HepG2 (cell line): ENCODE measurements at regions of chr20 and their contacts with region 1.

Region 1: GRCh38 chr20:9578594-9578993 is 64.2 kb downstream of the LAMP5 start:
- DNase-seq: no peak
- ATAC-seq: no peak
- H3K4me3 ChIP-seq: no peak overlapping the region
- H3K27ac ChIP-seq: no peak overlapping the region
- H3K4me1 ChIP-seq: no peaks in the 10 kb centered on the region
- H3K27me3 ChIP-seq: no peaks in the 10 kb centered on the region
- CTCF ChIP-seq: no peak
- EP300 ChIP-seq: no peak
- POLR2A ChIP-seq: no peak
- RAD21 ChIP-seq: no peak

Region 2: GRCh38 chr20:7596541-7596940 is 1982.1 kb before region 1 on chr20:
- CTCF ChIA-PET with region 1: no interaction called
- POLR2A ChIA-PET with region 1: no interaction called
- in situ Hi-C with region 1: no loop called
- intact Hi-C with region 1: loop called (anchors 5 kb)
- DNase-seq: no peak
- ATAC-seq: no peak
- H3K4me3 ChIP-seq: no peak overlapping the region
- H3K27ac ChIP-seq: no peak overlapping the region
- H3K4me1 ChIP-seq: no peaks in the 10 kb centered on the region
- H3K27me3 ChIP-seq: no peaks in the 10 kb centered on the region
- CTCF ChIP-seq: no peak
- EP300 ChIP-seq: no peak
- POLR2A ChIP-seq: no peak
- RAD21 ChIP-seq: no peak